Testis (tissue), 5 donors: ENCODE measurements at regions of chr3 and their contacts with region 1.

Region 1: GRCh38 chr3:194306109-194306686 is 44.9 kb downstream of the CPN2 start:
- DNase-seq: no peak
- H3K4me3 ChIP-seq: no peak overlapping the region
- H3K27ac ChIP-seq: no peak overlapping the region
- H3K4me1 ChIP-seq: peaks cover 4% of the 10 kb centered on the region
- H3K27me3 ChIP-seq: no peaks in the 10 kb centered on the region
- CTCF ChIP-seq: no peak
- POLR2A ChIP-seq: no peak

Region 2: GRCh38 chr3:193894121-193894863 is 411.9 kb before region 1 on chr3:
- intact Hi-C with region 1: no loop called
- DNase-seq: no peak
- H3K4me3 ChIP-seq: no peak overlapping the region
- H3K27ac ChIP-seq: no peak overlapping the region
- H3K4me1 ChIP-seq: peaks cover 15% of the 10 kb centered on the region
- H3K27me3 ChIP-seq: no peaks in the 10 kb centered on the region
- CTCF ChIP-seq: no peak
- POLR2A ChIP-seq: no peak

Region 3: DNA sequence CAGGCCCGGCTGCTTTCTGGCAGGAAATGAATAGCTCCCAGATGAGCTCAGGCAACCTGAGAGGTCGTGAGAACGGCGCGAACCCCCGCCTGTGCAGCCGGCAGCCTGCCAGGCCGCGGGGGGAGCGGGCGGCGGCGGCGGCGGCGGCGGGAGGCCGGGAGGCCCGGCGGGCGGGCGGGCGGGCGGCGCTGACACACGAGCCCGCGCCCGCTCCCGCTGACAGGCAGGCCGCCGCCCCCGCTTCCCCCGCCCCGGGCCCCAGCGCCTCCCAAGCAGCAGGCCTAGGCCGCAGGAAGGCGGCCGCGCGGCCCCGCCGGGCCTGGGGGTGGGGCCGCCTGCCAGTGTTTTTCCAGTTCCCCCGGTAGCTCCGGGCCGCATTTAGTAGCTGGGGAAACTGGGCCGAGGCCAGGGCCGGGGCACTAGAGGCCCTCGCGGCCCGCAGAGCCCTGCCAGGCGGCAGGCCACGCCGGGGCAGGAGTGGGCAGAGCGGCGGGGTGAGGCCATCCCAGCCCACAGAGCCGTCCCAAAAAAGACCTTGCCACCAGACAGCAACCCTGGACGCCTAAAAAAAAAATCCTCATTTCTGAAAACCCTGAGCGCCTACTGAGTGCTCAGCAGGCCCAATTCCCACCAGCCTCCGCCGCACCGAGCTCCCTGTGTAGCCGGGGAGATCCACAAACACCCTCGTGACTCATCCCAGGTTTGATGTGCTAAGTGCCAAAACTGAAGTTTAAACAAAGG is 164.6 kb before region 1 on chr3:
- intact Hi-C with region 1: loop called (anchors 5 kb)
- DNase-seq: peak; percentile 92
- H3K4me3 ChIP-seq: peak overlapping the region; percentile 37 to 42
- H3K27ac ChIP-seq: peak overlapping the region; percentile 75 to 84
- H3K4me1 ChIP-seq: peaks cover 36% of the 10 kb centered on the region
- H3K27me3 ChIP-seq: no peaks in the 10 kb centered on the region
- CTCF ChIP-seq: no peak
- POLR2A ChIP-seq: no peak

Region 4: DNA sequence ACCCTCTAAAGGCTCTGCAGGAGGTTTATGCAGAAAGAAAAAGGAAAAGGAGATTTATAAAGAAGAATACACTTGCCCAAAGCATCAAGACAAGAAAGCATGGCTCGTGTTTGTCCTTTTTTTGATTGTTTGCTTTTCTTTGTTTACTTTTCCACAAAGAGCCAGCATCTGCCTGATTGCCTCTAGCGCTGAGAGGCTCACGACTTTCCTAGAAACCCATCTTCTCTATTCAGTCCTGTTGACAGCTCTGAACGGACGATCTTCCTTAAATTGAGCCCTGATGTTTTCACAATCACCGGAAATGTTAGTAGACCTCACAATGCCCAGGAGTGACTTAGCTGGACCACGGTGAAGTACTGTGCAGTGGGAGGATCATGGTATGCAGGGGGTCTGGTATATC is 80.4 kb after region 1 on chr3:
- intact Hi-C with region 1: no loop called
- DNase-seq: no peak
- H3K4me3 ChIP-seq: no peak overlapping the region
- H3K27ac ChIP-seq: no peak overlapping the region
- H3K4me1 ChIP-seq: no peaks in the 10 kb centered on the region
- H3K27me3 ChIP-seq: no peaks in the 10 kb centered on the region
- CTCF ChIP-seq: no peak
- POLR2A ChIP-seq: no peak